Vagina (tissue), 2 donors: ENCODE measurements at regions of chr14 and their contacts with region 1.

Region 1: DNA sequence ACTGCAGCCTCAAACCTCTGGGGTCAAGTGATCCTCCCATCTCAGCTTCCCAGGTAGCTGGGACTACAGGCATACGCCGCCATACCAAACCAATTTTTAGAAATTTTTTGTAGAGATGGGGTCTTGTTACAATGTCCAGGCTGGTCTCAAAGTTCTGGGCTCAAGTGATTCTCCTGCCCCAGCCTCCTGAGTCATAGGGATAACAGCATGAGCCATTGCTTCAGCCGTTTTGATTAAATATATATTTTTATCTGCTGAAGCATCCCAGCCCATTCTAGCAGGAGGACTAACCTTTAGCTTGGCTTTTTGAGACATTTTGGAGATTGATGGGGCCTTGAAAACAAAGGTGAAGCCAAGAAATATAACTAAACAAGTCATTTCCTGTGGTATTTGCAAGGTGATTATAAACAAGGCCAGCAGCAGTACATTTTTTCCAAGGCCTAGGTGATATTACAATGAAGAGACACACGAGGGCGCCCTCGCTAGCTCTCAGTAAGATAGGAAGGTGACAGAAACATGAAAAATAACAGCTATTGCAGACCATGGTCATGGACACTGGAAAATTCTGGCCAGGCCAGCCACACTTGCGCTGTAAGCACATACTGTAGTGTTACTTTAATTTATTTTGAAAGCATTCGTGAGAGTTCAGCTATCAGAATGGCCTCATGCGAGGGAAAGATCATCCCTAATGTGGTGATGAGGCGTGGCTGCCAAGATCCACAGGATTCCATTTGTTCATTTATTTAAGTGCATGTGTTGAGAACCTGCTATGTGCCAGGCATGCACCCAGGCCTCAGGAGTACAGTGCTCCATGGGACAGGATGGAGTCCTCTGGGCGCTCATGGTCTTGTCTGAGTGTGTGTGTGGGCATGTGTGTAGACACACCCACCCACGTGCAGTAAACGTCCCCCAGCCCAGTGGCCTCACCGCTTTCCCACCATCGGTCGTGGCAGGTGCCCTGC is 63.5 kb downstream of the DGLUCY start:
- DNase-seq: no peak
- H3K4me3 ChIP-seq: no peak overlapping the region
- H3K27ac ChIP-seq: no peak overlapping the region
- H3K4me1 ChIP-seq: no peaks in the 10 kb centered on the region
- H3K27me3 ChIP-seq: no peaks in the 10 kb centered on the region
- CTCF ChIP-seq: peak; percentile 55 to 66 (median 55)
- POLR2A ChIP-seq: no peak

Region 2: GRCh38 chr14:90905531-90905930 is 271.8 kb before region 1 on chr14:
- intact Hi-C with region 1: loop called (anchors 5 kb)
- DNase-seq: no peak
- H3K4me3 ChIP-seq: no peak overlapping the region
- H3K27ac ChIP-seq: no peak overlapping the region
- H3K4me1 ChIP-seq: no peaks in the 10 kb centered on the region
- H3K27me3 ChIP-seq: no peaks in the 10 kb centered on the region
- CTCF ChIP-seq: no peak
- POLR2A ChIP-seq: no peak

Region 3: GRCh38 chr14:91060351-91061055 is 116.9 kb before region 1 on chr14 and contains the start of gene RPS6KA5:
- intact Hi-C with region 1: loop called (anchors 10 kb)
- DNase-seq: peak; percentile 100
- H3K4me3 ChIP-seq: peak within 1 kb of the TSS; percentile 77 to 93
- H3K27ac ChIP-seq: peak within 1 kb of the TSS; percentile 97
- H3K4me1 ChIP-seq: peaks cover 25% of the 10 kb centered on the region
- H3K27me3 ChIP-seq: no peaks in the 10 kb centered on the region
- CTCF ChIP-seq: peak in 2 of 3 experiments; percentile 23 to 45
- POLR2A ChIP-seq: peak in 1 of 2 donors; percentile 74
- total RNA-seq, gene RPS6KA5: 5.2 TPM

Region 4: GRCh38 chr14:91108941-91109611 is 68.3 kb before region 1 on chr14:
- intact Hi-C with region 1: no loop called
- DNase-seq: no peak
- H3K4me3 ChIP-seq: no peak overlapping the region
- H3K27ac ChIP-seq: peak overlapping the region; percentile 68
- H3K4me1 ChIP-seq: peaks cover 22% of the 10 kb centered on the region
- H3K27me3 ChIP-seq: no peaks in the 10 kb centered on the region
- CTCF ChIP-seq: no peak
- POLR2A ChIP-seq: no peak

Region 5: DNA sequence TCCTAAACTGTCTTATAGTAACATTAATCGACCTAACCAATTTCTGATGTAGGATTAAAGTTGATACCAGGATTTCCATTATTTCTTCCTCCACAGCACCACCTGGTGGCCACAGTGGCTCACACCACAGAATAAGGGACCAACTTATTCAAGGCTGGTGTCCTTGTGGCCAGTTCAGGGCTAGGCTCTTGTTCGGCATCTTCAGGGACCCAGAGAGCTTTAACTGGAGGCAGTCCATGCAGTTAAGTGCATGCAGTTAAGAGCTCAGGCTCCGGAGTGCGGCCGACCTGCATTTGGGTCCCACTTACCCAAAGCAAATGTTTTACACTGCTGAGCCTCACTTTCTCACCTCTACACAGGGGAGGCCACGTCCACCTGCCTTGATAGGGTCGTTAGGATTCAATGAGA is 109.2 kb after region 1 on chr14:
- intact Hi-C with region 1: loop called (anchors 2 kb)
- DNase-seq: no peak
- H3K4me3 ChIP-seq: no peak overlapping the region
- H3K27ac ChIP-seq: no peak overlapping the region
- H3K4me1 ChIP-seq: peaks cover 25% of the 10 kb centered on the region
- H3K27me3 ChIP-seq: no peaks in the 10 kb centered on the region
- CTCF ChIP-seq: peak; percentile 75 to 96 (median 91)
- POLR2A ChIP-seq: no peak